GM13976 (cell line): ENCODE measurements at regions of chr3 and their contacts with region 1.

Region 1: GRCh38 chr3:196969660-196970546 is 1.3 kb upstream of the PIGZ start:
- DNase-seq: peak; percentile 91
- CTCF ChIP-seq: peak; percentile 93

Region 2: DNA sequence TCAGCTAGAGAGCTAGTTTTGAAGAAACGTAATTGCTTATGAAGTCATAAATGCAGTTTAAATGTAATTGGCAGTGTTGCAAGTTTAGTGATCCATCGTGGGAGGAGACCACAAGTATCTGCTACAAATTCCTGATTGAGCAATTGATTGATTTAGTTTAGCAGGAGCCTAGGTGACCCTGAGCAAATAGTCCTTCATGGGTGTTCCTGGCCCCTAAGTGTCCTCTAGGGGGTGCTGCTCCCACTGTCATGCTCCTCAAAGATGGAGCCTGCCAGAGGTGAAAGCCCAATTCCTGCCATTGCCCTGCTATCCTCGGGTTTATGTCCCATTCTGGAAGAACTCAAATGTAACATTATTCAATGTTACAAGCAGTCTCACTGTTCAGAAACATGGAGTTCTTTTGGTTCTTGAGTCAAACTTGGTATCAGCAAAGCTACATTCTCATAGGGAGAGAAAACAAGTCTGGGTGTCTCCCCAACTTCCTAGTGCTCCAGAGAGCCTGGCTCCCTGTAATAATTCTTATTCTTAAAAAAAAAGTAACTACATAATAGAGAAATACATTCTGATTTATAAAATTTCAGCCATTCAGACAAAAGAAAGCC is 132.0 kb before region 1 on chr3:
- in situ Hi-C with region 1: loop called (anchors 10 kb)
- DNase-seq: peak; percentile 80
- CTCF ChIP-seq: peak; percentile 72